ENCODE measurements at regions of chr5 and their contacts with region 1.

Region 1: GRCh38 chr5:122144236-122144635 is 14.9 kb downstream of the ZNF474 start:
- DNase-seq: no peak
- ATAC-seq: no peak
- H3K4me3 ChIP-seq: no peak overlapping the region
- H3K27ac ChIP-seq: no peak overlapping the region
- H3K4me1 ChIP-seq: peaks cover 0 to 9% of the 10 kb centered on the region in 2 experiments; a peak in 2 of 5 replicates
- H3K27me3 ChIP-seq: no peaks in the 10 kb centered on the region
- CTCF ChIP-seq: no peak
- EP300 ChIP-seq: no peak
- POLR2A ChIP-seq: no peak
- RAD21 ChIP-seq: no peak

Region 2: GRCh38 chr5:121890297-121890858 is 253.9 kb before region 1 on chr5:
- CTCF ChIA-PET with region 1: no interaction called
- POLR2A ChIA-PET with region 1: no interaction called
- in situ Hi-C with region 1: no loop called
- intact Hi-C with region 1: no loop called
- DNase-seq: no peak
- ATAC-seq: peak; percentile 65; the same call in 2 of the 3 replicates
- H3K4me3 ChIP-seq: no peak overlapping the region
- H3K27ac ChIP-seq: no peak overlapping the region
- H3K4me1 ChIP-seq: no peaks in the 10 kb centered on the region
- H3K27me3 ChIP-seq: no peaks in the 10 kb centered on the region
- CTCF ChIP-seq: no peak
- EP300 ChIP-seq: no peak
- POLR2A ChIP-seq: no peak
- RAD21 ChIP-seq: no peak

Region 3: GRCh38 chr5:122076664-122077365 is 67.4 kb before region 1 on chr5:
- CTCF ChIA-PET with region 1: no interaction called
- POLR2A ChIA-PET with region 1: no interaction called
- in situ Hi-C with region 1: no loop called
- intact Hi-C with region 1: no loop called
- DNase-seq: no peak
- ATAC-seq: no peak
- H3K4me3 ChIP-seq: no peak overlapping the region
- H3K27ac ChIP-seq: no peak overlapping the region
- H3K4me1 ChIP-seq: no peaks in the 10 kb centered on the region
- H3K27me3 ChIP-seq: no peaks in the 10 kb centered on the region
- CTCF ChIP-seq: 0 out of 6 replicates have a peak, but pooled peaks of 1 of the 3 experiments have one; percentile 12
- EP300 ChIP-seq: no peak
- POLR2A ChIP-seq: no peak
- RAD21 ChIP-seq: no peak

Region 4: DNA sequence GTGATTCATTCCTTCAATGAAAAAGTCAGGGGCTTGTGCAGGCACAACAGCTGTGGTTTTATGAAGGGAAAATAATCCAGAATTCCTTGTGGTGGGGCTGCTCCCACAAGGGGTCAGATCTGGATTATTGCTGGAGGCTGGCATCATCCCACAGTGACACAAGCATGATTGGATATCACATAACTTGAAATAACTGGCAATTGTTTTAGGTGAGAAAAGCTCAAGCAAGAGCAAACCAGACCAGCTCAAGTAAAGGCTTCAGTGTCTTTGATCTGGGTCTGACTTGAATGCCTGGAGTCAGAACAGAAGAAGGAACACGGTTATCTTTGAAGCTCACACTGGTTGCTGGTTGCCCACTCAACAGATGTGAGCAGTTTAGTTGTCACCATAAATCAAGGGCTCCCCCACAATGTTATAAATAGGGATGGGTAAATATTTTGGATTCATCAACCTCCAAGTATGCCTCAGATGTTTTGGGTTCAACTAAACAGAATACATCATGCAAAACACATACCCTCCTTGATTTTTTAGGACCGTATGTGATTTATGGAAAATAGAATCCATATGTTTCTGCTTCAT is 18.0 kb before region 1 on chr5:
- CTCF ChIA-PET with region 1: no interaction called
- POLR2A ChIA-PET with region 1: interaction called, 5 read pairs
- in situ Hi-C with region 1: no loop called
- intact Hi-C with region 1: loop called (anchors 2 kb)
- DNase-seq: peak; percentile 41 to 93 (median 66)
- ATAC-seq: peak; percentile 86
- H3K4me3 ChIP-seq: no peak overlapping the region
- H3K27ac ChIP-seq: peak overlapping the region; percentile 76
- H3K4me1 ChIP-seq: peaks cover 7 to 52% of the 10 kb centered on the region in 2 experiments; a peak in 3 of 5 replicates
- H3K27me3 ChIP-seq: no peaks in the 10 kb centered on the region
- CTCF ChIP-seq: no peak
- EP300 ChIP-seq: peak; percentile 91
- POLR2A ChIP-seq: no peak
- RAD21 ChIP-seq: 0 out of 4 replicates have a peak, but pooled peaks of 1 of the 2 experiments have one; percentile 8

Region 5: GRCh38 chr5:122182491-122182921 is 38.3 kb after region 1 on chr5:
- CTCF ChIA-PET with region 1: no interaction called
- POLR2A ChIA-PET with region 1: no interaction called
- in situ Hi-C with region 1: no loop called
- intact Hi-C with region 1: no loop called
- DNase-seq: peak in 1 of 4 experiments; percentile 21
- ATAC-seq: peak; percentile 48; the same call in 1 of the 3 replicates
- H3K4me3 ChIP-seq: no peak overlapping the region
- H3K27ac ChIP-seq: no peak overlapping the region
- H3K4me1 ChIP-seq: no peaks in the 10 kb centered on the region; a peak in 1 of 5 replicates
- H3K27me3 ChIP-seq: no peaks in the 10 kb centered on the region
- CTCF ChIP-seq: no peak
- EP300 ChIP-seq: no peak
- POLR2A ChIP-seq: no peak
- RAD21 ChIP-seq: no peak